GM12878 (cell line): ENCODE measurements at regions of chr12 and their contacts with region 1.

Region 1: DNA sequence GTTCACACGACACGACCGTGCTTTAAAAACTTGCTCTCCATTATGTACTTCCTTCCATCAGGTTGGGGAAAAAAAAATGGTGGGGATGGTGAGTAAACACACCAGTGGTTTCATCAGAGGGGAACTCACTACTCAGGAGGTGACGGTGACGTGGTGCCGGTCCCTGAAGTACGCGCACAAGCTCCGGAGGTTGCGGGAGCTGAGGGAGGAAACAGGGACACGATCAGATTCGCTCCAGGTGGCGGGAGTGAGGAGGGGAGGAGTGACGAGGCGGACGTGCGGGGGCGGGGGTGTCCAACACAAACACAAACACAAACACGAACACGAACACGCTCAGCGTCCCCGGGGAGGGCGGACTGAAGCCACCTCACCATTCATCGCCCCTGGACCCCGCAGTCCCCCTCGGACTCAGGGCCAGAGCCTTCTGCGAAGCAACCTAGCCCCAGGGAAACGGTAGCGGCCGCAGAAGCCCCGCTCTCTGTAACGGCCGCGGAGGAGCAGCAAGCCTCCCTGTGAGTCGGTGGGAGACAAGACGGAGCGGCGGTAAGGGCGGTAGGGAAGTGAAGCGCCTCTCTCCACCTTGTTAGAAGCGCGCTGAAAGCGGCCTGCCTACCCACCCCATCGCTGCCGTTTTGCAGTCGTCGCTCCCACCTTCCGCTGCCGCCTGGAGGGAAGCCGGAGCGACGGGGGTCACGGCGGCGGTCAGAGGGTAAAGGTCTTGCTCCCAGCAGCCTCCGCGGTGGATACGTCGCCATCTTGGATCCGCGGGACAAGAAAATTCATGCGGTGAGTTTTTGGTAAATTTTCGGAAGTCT is at the start of gene CNOT2:
- DNase-seq: peak; percentile 44
- ATAC-seq: peak; percentile 85
- H3K4me3 ChIP-seq: peak within 1 kb of the TSS; percentile 94
- H3K27ac ChIP-seq: peak within 1 kb of the TSS; percentile 96
- H3K4me1 ChIP-seq: no peaks in the 10 kb centered on the region; the same call in 1 of the 2 replicates
- H3K27me3 ChIP-seq: no peaks in the 10 kb centered on the region
- CTCF ChIP-seq: no peak
- EP300 ChIP-seq: peak in 1 of 2 experiments; percentile 58; a peak in 2 of 4 replicates
- POLR2A ChIP-seq: peak; percentile 88
- RAD21 ChIP-seq: no peak
- polyA plus RNA-seq, gene CNOT2: 37.9 to 55.4 TPM

Region 2: DNA sequence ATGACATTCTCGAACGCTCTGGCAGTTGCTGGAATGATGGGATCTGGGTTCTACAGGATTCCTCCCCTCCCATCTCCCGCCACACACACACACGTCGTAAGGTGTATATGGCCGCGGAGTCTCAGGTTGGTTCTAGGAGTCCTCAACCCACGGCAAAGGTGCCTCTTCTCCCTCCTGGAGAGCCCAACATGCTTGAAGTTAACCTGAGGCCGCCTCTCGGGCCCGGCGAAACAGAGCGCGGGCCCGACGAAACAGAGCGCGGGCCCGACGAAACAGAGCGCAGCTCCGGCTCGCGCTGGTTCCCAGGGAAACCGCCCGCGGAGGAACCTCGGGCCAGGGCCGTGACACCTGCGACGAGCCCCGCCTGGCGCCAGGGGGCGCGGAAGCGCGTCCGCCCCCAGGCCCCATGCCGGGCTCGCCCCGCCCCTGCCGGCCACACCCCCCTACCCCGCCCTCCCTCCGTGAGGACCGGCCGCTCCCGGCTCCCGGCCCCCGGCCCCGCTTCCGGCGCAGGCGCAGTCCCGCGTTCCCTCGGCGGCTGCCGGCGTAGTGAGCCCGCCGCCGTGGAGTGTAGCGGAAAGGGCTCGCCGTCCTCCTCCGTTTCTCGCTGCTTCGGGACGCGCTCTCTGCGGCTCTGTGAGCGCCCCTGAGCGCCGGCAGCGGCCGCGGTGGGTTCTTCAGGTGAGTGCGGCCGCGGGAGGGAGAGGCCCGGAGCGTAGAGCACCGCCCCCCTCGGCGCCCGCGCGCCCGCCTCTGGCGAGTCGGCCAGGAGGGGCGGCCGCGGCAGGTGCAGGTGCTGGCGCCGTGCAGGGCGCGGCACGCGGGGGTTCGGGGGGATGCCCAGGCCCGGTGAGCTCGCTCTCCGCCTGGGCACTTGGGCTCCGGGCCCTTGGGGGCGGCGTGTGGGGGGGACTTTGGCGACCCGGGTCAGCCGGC is 504.3 kb before region 1 on chr12 and contains the start of gene RAB3IP:
- CTCF ChIA-PET with region 1: no interaction called
- POLR2A ChIA-PET with region 1: no interaction called
- RAD21 ChIA-PET with region 1: no interaction called
- SMC1A ChIA-PET with region 1: no interaction called
- in situ Hi-C with region 1: loop called (anchors 10 kb)
- intact Hi-C with region 1: loop called (anchors 10 kb)
- DNase-seq: peak; percentile 51
- ATAC-seq: peak; percentile 88
- H3K4me3 ChIP-seq: peak within 1 kb of the TSS; percentile 77
- H3K27ac ChIP-seq: peak within 1 kb of the TSS; percentile 74
- H3K4me1 ChIP-seq: peaks cover 3% of the 10 kb centered on the region; the same call in 1 of the 2 replicates
- H3K27me3 ChIP-seq: no peaks in the 10 kb centered on the region
- CTCF ChIP-seq: peak; percentile 52 to 81 (median 64); a peak in 5 of 6 replicates
- EP300 ChIP-seq: peak in 1 of 2 experiments; percentile 1; a peak in 1 of 4 replicates
- POLR2A ChIP-seq: peak; percentile 69
- RAD21 ChIP-seq: no peak
- polyA plus RNA-seq, gene RAB3IP: 22.4 to 30.9 TPM

Region 3: GRCh38 chr12:69906411-69907216 is 336.3 kb before region 1 on chr12:
- CTCF ChIA-PET with region 1: interaction called, 3 read pairs
- POLR2A ChIA-PET with region 1: no interaction called
- RAD21 ChIA-PET with region 1: no interaction called
- SMC1A ChIA-PET with region 1: no interaction called
- in situ Hi-C with region 1: no loop called
- intact Hi-C with region 1: loop called (anchors 2 kb)
- DNase-seq: peak; percentile 75
- ATAC-seq: peak; percentile 89
- H3K4me3 ChIP-seq: no peak overlapping the region
- H3K27ac ChIP-seq: peak overlapping the region; percentile 14
- H3K4me1 ChIP-seq: peaks cover 16% of the 10 kb centered on the region
- H3K27me3 ChIP-seq: no peaks in the 10 kb centered on the region
- CTCF ChIP-seq: no peak
- EP300 ChIP-seq: no peak
- POLR2A ChIP-seq: no peak
- RAD21 ChIP-seq: no peak

Region 4: GRCh38 chr12:70178038-70178437 is 64.9 kb before region 1 on chr12:
- CTCF ChIA-PET with region 1: no interaction called
- POLR2A ChIA-PET with region 1: no interaction called
- RAD21 ChIA-PET with region 1: no interaction called
- SMC1A ChIA-PET with region 1: no interaction called
- in situ Hi-C with region 1: no loop called
- intact Hi-C with region 1: no loop called
- DNase-seq: no peak
- ATAC-seq: no peak
- H3K4me3 ChIP-seq: no peak overlapping the region
- H3K27ac ChIP-seq: no peak overlapping the region
- H3K4me1 ChIP-seq: no peaks in the 10 kb centered on the region
- H3K27me3 ChIP-seq: no peaks in the 10 kb centered on the region
- CTCF ChIP-seq: no peak
- EP300 ChIP-seq: no peak
- POLR2A ChIP-seq: no peak
- RAD21 ChIP-seq: no peak

Region 5: DNA sequence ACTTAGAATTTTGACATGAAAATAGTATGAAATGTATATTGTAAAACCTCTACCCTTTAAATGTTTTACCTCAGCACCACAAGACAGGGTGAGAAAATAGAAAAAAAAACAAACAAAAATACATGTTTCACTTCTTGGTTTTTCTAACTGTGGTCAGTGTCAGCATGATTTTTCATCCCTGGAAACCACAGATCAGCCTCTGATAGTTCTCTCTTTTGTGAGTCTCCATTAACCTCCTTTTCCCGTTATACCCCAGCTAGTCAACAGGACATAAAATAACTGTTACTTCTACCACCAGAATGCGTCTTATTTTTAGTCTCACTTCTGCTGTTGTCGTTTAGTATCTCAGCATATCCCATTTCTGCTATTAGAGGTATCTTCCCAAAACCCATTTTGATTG is 74.9 kb after region 1 on chr12:
- CTCF ChIA-PET with region 1: no interaction called
- POLR2A ChIA-PET with region 1: no interaction called
- RAD21 ChIA-PET with region 1: no interaction called
- SMC1A ChIA-PET with region 1: interaction called, 3 read pairs
- in situ Hi-C with region 1: no loop called
- intact Hi-C with region 1: loop called (anchors 1 kb)
- DNase-seq: peak; percentile 77
- ATAC-seq: peak; percentile 92
- H3K4me3 ChIP-seq: no peak overlapping the region
- H3K27ac ChIP-seq: no peak overlapping the region
- H3K4me1 ChIP-seq: peaks cover 11% of the 10 kb centered on the region
- H3K27me3 ChIP-seq: no peaks in the 10 kb centered on the region
- CTCF ChIP-seq: no peak
- EP300 ChIP-seq: peak; percentile 83 to 94
- POLR2A ChIP-seq: no peak
- RAD21 ChIP-seq: no peak

Region 6: GRCh38 chr12:70365648-70366518 is 123.0 kb after region 1 on chr12 and contains the start of gene KCNMB4:
- CTCF ChIA-PET with region 1: no interaction called
- POLR2A ChIA-PET with region 1: interaction called, 3 read pairs
- RAD21 ChIA-PET with region 1: interaction called, 3 read pairs
- SMC1A ChIA-PET with region 1: interaction called, 4 read pairs
- in situ Hi-C with region 1: no loop called
- intact Hi-C with region 1: loop called (anchors 5 kb)
- DNase-seq: peak; percentile 7
- ATAC-seq: peak; percentile 91
- H3K4me3 ChIP-seq: peak within 1 kb of the TSS; percentile 73
- H3K27ac ChIP-seq: no peak within 1 kb of the TSS
- H3K4me1 ChIP-seq: peaks cover 15% of the 10 kb centered on the region
- H3K27me3 ChIP-seq: peaks cover 5 to 18% of the 10 kb centered on the region in 2 experiments
- CTCF ChIP-seq: no peak
- EP300 ChIP-seq: no peak
- POLR2A ChIP-seq: 0 out of 2 replicates have a peak, but pooled peaks have one; percentile 35
- RAD21 ChIP-seq: no peak
- polyA plus RNA-seq, gene KCNMB4: 0.06 to 0.20 TPM